CD8-positive, alpha-beta T cell (primary cell): ENCODE measurements at regions of chr17 and their contacts with region 1.

Region 1: DNA sequence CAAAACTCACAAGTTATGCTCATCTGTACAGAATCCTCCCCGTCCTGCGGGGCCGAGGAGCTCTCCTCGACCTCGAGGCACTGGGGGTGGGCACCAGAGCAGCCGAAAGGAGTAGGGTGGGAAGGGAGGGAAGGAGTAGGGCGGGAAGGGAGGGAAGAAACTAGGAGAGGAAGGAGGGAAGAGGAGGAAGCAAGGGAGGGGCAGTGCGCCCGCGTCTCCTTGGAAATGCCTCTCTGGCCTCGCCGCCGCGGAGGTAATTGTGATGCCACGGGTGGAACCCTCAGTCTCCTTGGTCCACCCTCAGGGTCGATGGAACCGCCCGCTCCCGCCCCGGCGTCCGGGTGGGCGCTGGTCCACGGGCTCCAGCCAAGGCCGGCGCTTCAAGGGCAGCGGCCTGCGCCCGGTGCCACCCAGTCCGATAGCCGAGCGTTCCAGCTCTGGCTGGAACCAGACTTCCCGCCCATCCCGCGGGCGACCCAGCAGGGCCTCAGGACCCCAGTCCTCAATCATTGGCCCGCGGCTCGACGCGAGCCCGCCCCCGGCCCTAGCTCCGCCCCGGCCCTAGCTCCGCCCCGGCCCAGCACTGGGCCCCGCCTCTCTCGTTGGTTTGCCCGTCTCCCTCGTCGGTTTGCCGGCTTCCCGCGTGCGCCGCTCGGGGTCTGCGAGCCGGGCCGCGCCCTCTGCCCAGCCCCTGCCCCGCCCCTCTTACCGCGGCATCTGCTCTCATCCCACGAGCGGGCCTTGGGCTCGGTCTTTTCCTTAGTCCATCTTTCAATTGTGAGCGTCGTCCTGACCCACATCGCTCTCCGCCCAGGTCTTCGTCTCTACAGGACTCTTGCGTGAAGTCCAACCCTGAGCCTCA is 596 bp downstream of the PROCA1 start:
- DNase-seq: peak; percentile 77 to 90 (median 89)
- ATAC-seq: peak; percentile 92
- H3K4me3 ChIP-seq: peak overlapping the region; percentile 66 to 89
- H3K4me3 Mint-ChIP-seq: peak overlapping the region; percentile 89
- H3K27ac ChIP-seq: peak overlapping the region; percentile 69 to 76
- H3K27ac Mint-ChIP-seq: peak overlapping the region; percentile 91
- H3K4me1 ChIP-seq: peaks cover 16% of the 10 kb centered on the region
- H3K4me1 Mint-ChIP-seq: peaks cover 17% of the 10 kb centered on the region
- H3K27me3 ChIP-seq: no peaks in the 10 kb centered on the region
- H3K27me3 Mint-ChIP-seq: peaks cover 14% of the 10 kb centered on the region
- CTCF ChIP-seq: no peak

Region 2: GRCh38 chr17:28576758-28577465 is 134.2 kb before region 1 on chr17 and contains the start of gene ALDOC:
- CTCF ChIA-PET with region 1: no interaction called
- POLR2A ChIA-PET with region 1: interaction called, 3 read pairs
- intact Hi-C with region 1: loop called in 1 of 2 experiments (anchors 2 kb)
- DNase-seq: peak; percentile 95 to 99 (median 99)
- ATAC-seq: peak; percentile 99
- H3K4me3 ChIP-seq: peak within 1 kb of the TSS; percentile 36 to 40
- H3K4me3 Mint-ChIP-seq: peak within 1 kb of the TSS; percentile 81
- H3K27ac ChIP-seq: peak within 1 kb of the TSS; percentile 17 to 62
- H3K27ac Mint-ChIP-seq: peak within 1 kb of the TSS; percentile 92
- H3K4me1 ChIP-seq: peaks cover 28% of the 10 kb centered on the region
- H3K4me1 Mint-ChIP-seq: peaks cover 42% of the 10 kb centered on the region
- H3K27me3 ChIP-seq: no peaks in the 10 kb centered on the region
- H3K27me3 Mint-ChIP-seq: no peaks in the 10 kb centered on the region
- CTCF ChIP-seq: no peak
- total RNA-seq, gene ALDOC: 16.3 to 16.5 TPM

Region 3: GRCh38 chr17:28661635-28662537 is 49.2 kb before region 1 on chr17 and contains the starts of genes SDF2 and SUPT6H:
- CTCF ChIA-PET with region 1: no interaction called
- POLR2A ChIA-PET with region 1: interaction called, 13 read pairs
- intact Hi-C with region 1: loop called in 1 of 2 experiments (anchors 2 kb)
- DNase-seq: peak; percentile 83 to 97 (median 96)
- ATAC-seq: peak; percentile 85
- H3K4me3 ChIP-seq: peak within 1 kb of the TSS; percentile 91 to 94
- H3K4me3 Mint-ChIP-seq: peak within 1 kb of the TSS; percentile 98
- H3K27ac ChIP-seq: peak within 1 kb of the TSS; percentile 98 to 99
- H3K27ac Mint-ChIP-seq: peak within 1 kb of the TSS; percentile 99
- H3K4me1 ChIP-seq: peaks cover 43% of the 10 kb centered on the region
- H3K4me1 Mint-ChIP-seq: peaks cover 60% of the 10 kb centered on the region
- H3K27me3 ChIP-seq: no peaks in the 10 kb centered on the region
- H3K27me3 Mint-ChIP-seq: no peaks in the 10 kb centered on the region
- CTCF ChIP-seq: peak; percentile 20
- total RNA-seq, gene SDF2: 30.4 to 38.3 TPM
- total RNA-seq, gene SUPT6H: 163 to 169 TPM

Region 4: DNA sequence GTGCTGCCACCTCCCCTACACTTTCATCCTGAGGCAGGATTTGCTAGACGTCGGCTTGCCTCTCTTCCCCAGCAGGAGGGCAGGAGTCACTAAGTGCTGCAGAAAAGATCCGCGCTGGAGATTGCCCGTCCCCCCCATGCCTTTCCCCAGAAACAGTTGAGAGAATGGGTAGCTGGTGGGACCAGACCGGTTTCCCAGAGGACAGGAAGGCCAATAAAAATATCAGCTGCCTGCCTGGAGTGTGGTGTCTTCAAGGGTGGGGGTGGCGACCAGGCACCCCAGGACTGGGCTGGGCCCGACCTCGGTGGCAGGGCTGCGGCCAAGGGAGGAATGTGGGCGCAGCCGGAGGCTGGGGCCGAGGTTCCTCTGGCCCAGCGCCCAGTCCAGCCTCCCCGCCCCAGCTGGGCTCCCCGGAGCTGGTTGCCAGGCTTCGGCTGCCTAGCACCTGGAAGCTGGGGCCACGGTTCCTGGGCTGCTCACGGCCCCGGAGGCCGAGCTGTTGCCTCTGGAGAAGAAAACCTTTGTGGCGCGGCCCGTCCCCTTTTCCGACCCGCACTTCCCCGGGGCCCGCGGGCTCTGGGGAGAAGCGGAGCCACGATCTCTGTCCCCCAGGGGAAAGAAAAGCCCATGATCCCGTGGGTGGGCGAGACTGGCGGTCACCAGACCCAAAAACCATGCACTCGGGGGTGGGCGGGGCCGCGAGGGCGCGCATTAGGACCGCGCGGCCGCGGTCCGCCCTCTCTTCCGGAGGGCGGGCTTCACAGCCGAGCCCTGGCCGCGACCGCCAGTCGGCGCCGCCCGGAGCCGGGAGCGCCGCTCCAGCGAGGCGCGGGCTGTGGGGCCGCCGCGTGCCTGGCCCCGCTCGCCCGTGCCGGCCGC is 32.4 kb after region 1 on chr17 and contains the start of gene TRAF4:
- CTCF ChIA-PET with region 1: interaction called, 3 read pairs
- POLR2A ChIA-PET with region 1: no interaction called
- intact Hi-C with region 1: loop called in 1 of 2 experiments (anchors 5 kb)
- DNase-seq: peak; percentile 44 to 91 (median 74)
- ATAC-seq: peak; percentile 87
- H3K4me3 ChIP-seq: peak within 1 kb of the TSS; percentile 69 to 72
- H3K4me3 Mint-ChIP-seq: peak within 1 kb of the TSS; percentile 88
- H3K27ac ChIP-seq: peak within 1 kb of the TSS; percentile 62 to 82
- H3K27ac Mint-ChIP-seq: peak within 1 kb of the TSS; percentile 84
- H3K4me1 ChIP-seq: peaks cover 33% of the 10 kb centered on the region
- H3K4me1 Mint-ChIP-seq: peaks cover 28% of the 10 kb centered on the region
- H3K27me3 ChIP-seq: no peaks in the 10 kb centered on the region
- H3K27me3 Mint-ChIP-seq: no peaks in the 10 kb centered on the region
- CTCF ChIP-seq: no peak
- total RNA-seq, gene TRAF4: 418 to 439 TPM

Region 5: DNA sequence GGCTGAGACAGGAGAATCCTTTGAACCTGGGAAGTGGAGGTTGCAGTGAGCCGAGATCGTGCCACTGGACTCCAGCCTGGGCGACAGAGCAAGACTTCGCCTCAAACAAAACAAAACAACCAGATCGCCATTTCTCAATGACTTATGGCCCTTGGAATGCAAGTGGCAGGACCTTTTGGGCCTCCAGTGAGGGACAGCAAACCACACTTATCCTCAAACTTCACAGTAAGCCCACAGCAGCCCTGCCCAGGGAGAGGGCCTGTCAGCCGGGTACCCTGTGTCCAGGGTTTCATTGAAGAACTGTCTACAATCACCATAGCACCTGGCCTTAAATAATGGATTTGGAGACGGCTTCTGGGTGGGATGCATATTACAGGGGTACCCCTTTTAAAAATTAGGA is 44.4 kb after region 1 on chr17:
- CTCF ChIA-PET with region 1: no interaction called
- POLR2A ChIA-PET with region 1: no interaction called
- intact Hi-C with region 1: no loop called
- DNase-seq: no peak
- ATAC-seq: no peak
- H3K4me3 ChIP-seq: no peak overlapping the region
- H3K4me3 Mint-ChIP-seq: no peak overlapping the region
- H3K27ac ChIP-seq: no peak overlapping the region
- H3K27ac Mint-ChIP-seq: no peak overlapping the region
- H3K4me1 ChIP-seq: no peaks in the 10 kb centered on the region
- H3K4me1 Mint-ChIP-seq: no peaks in the 10 kb centered on the region
- H3K27me3 ChIP-seq: no peaks in the 10 kb centered on the region
- H3K27me3 Mint-ChIP-seq: no peaks in the 10 kb centered on the region
- CTCF ChIP-seq: no peak